SK-N-SH (cell line): ENCODE measurements at regions of chr2 and their contacts with region 1.

Region 1: DNA sequence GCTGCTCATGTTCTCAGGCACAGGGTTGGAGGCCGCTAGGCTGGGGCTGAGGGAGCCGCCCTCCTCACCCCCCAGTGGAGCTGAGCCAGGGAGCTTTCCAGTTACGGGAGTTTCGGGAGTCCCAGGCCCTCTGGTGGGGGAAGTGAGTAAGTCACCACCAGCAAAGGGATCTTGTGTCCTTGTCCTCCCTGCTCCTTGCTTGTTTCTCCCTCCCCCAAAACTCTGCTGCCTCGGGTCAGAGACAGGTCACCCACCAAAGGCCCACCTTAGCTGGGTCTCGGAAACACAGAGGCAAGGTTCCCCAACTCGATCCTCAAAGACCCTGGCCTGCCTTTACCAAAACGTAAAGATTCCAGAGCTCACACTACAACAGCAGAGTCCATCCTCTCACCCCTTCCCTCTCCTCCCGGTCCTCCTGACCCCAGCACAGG is 60.5 kb upstream of the POMC start:
- DNase-seq: peak; percentile 98
- H3K4me3 ChIP-seq: no peak overlapping the region; a peak in 1 of 4 replicates
- H3K27ac ChIP-seq: peak overlapping the region in 1 of 2 experiments; percentile 68; a peak in 2 of 4 replicates
- H3K4me1 ChIP-seq: peaks cover 3 to 37% of the 10 kb centered on the region in 2 experiments; a peak in 2 of 4 replicates
- H3K27me3 ChIP-seq: no peaks in the 10 kb centered on the region
- CTCF ChIP-seq: peak; percentile 84
- EP300 ChIP-seq: no peak
- RAD21 ChIP-seq: peak; percentile 72

Region 2: DNA sequence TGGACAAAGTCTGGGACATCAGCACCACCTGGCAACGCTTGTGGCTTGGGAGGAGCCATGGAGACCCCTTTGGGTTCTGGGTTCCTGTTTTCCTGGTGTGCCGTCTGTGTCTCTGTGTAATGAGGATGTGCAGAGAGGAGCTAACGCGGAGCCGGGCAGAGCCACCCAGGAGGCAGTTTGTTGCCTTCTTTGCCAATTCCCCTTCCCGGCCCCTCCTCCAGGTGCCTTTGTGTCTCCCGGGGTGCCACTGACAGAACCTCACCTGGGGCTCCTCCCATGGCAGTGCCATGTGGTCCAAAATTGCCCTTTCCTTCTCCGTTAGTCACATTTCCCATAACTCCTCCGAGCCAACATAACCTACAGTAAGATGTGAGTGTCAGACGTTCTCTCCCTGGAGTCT is 73.5 kb before region 1 on chr2:
- CTCF ChIA-PET with region 1: no interaction called
- POLR2A ChIA-PET with region 1: no interaction called
- DNase-seq: no peak
- H3K4me3 ChIP-seq: no peak overlapping the region
- H3K27ac ChIP-seq: no peak overlapping the region
- H3K4me1 ChIP-seq: peaks cover 0 to 9% of the 10 kb centered on the region in 2 experiments; a peak in 1 of 4 replicates
- H3K27me3 ChIP-seq: no peaks in the 10 kb centered on the region
- CTCF ChIP-seq: no peak
- EP300 ChIP-seq: no peak
- RAD21 ChIP-seq: no peak

Region 3: DNA sequence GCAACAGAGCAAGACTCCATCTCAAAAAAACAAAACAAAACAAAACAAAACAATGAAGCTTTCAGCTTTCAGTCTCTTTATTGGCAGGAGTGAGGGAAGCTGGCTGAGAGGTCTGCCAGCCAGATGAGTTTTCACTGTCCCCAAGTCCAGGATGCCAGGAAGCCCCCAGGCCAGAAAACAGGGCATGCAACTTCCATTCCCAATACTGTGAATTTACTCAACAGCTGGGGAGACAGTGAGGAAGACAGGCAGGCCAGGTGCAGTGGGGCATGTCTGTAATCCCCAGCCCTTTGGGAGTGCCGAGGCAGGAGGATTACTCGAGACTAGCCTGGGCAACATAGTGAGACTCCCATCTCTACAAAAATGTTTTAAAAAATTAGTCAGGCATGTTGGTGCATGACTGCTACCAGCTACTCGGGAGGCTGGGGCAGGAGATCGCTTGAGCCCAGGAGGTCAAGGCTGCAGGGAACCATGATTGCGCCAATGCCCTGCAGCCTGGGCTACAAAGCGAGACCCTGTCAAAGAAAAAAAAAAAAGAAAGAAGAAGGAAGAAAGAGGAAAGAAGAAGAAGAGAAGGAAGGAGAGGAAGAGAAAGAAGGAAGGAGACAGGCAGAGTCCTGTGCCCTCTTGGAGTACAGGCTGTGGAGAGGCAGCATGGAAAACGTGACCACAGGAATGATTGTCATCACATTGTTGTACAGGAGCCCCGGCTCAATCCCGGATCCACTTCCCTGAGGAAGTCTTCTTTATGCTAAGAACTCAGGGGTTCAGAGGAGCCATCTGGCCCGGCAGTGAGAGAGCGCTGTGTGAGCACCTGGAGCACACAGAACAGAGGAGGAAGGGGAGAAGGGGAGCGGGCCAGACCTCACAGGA is 31.3 kb before region 1 on chr2:
- CTCF ChIA-PET with region 1: interaction called, 44 read pairs
- POLR2A ChIA-PET with region 1: no interaction called
- DNase-seq: no peak
- H3K4me3 ChIP-seq: no peak overlapping the region
- H3K27ac ChIP-seq: no peak overlapping the region
- H3K4me1 ChIP-seq: peaks cover 0 to 8% of the 10 kb centered on the region in 2 experiments; a peak in 1 of 4 replicates
- H3K27me3 ChIP-seq: no peaks in the 10 kb centered on the region
- CTCF ChIP-seq: no peak
- EP300 ChIP-seq: no peak
- RAD21 ChIP-seq: no peak

Region 4: GRCh38 chr2:25215948-25216679 is 12.7 kb before region 1 on chr2:
- CTCF ChIA-PET with region 1: interaction called, 47 read pairs
- POLR2A ChIA-PET with region 1: no interaction called
- DNase-seq: peak; percentile 35
- H3K4me3 ChIP-seq: no peak overlapping the region
- H3K27ac ChIP-seq: no peak overlapping the region
- H3K4me1 ChIP-seq: peaks cover 0 to 8% of the 10 kb centered on the region in 2 experiments; a peak in 1 of 4 replicates
- H3K27me3 ChIP-seq: no peaks in the 10 kb centered on the region
- CTCF ChIP-seq: no peak
- EP300 ChIP-seq: no peak
- RAD21 ChIP-seq: no peak

Region 5: GRCh38 chr2:25252281-25253105 is 23.6 kb after region 1 on chr2:
- CTCF ChIA-PET with region 1: interaction called, 47 read pairs
- POLR2A ChIA-PET with region 1: interaction called, 6 read pairs
- DNase-seq: peak; percentile 99
- H3K4me3 ChIP-seq: peak overlapping the region in 1 of 2 experiments; percentile 52; a peak in 2 of 4 replicates
- H3K27ac ChIP-seq: peak overlapping the region in 1 of 2 experiments; percentile 96; a peak in 2 of 4 replicates
- H3K4me1 ChIP-seq: peaks cover 17 to 66% of the 10 kb centered on the region in 2 experiments
- H3K27me3 ChIP-seq: no peaks in the 10 kb centered on the region
- CTCF ChIP-seq: no peak
- EP300 ChIP-seq: peak in 1 of 2 experiments; percentile 37; a peak in 1 of 4 replicates
- RAD21 ChIP-seq: no peak; the same call in 1 of the 2 replicates

Region 6: DNA sequence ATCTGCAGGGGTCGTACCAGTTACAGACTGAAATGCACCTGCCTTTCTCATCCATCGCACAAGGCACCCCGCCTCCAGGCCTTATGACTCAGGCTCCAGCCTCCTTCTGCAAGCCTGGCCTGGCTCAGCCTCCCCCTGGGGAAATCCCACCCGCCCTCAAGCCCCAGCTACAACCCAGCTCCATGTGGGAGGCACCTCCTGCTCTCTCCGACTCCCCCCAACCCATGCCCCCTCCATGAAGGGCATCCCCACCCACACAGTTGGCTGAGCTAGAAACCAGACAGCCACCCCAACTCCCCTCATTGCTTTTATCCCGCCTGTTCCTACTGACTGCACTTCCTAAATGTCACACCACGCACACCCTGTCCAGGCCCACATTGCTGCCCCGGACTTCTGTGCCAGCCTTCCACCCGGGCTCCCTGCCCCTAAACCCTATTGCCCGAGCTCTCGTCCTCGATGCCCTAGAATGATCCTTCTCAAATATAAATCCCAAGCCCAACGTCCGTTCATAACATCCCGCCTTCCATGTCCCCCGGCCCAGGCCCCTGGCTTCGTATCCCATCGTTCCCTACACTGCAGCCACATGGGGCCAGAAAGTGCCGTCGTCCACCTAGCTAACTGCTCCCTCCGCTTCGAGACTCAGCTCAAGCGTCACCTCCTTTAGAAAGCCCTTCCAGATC is 103.0 kb after region 1 on chr2:
- CTCF ChIA-PET with region 1: interaction called, 10 read pairs
- POLR2A ChIA-PET with region 1: interaction called, 3 read pairs
- DNase-seq: no peak
- H3K4me3 ChIP-seq: no peak overlapping the region
- H3K27ac ChIP-seq: peak overlapping the region in 1 of 2 experiments; percentile 77; a peak in 1 of 4 replicates
- H3K4me1 ChIP-seq: peaks cover 0 to 67% of the 10 kb centered on the region in 2 experiments; a peak in 2 of 4 replicates
- H3K27me3 ChIP-seq: no peaks in the 10 kb centered on the region
- CTCF ChIP-seq: no peak
- EP300 ChIP-seq: no peak
- RAD21 ChIP-seq: no peak

Region 7: DNA sequence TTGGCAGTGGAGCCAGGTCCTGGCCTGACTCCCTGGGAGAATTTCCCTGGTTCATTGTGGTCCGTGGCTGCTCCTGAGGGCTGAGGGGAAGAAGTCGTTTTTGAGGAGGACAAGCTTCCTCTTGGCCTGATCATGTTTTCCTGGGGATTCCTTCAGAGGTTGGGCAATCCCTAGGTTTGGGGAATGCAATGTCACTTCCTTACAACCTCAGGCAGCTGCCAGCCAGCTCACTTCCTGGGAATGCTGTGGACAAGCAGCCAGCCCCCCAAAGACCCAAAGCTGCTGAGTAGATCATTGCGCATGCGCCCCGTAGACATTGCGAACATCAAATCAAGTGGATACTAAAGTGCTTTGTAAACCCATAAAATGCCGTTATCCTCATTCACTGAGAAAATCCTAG is 120.5 kb after region 1 on chr2:
- CTCF ChIA-PET with region 1: no interaction called
- POLR2A ChIA-PET with region 1: no interaction called
- DNase-seq: no peak
- H3K4me3 ChIP-seq: no peak overlapping the region
- H3K27ac ChIP-seq: no peak overlapping the region
- H3K4me1 ChIP-seq: peaks cover 0 to 9% of the 10 kb centered on the region in 2 experiments; a peak in 1 of 4 replicates
- H3K27me3 ChIP-seq: no peaks in the 10 kb centered on the region
- CTCF ChIP-seq: no peak
- EP300 ChIP-seq: no peak
- RAD21 ChIP-seq: no peak

Region 8: DNA sequence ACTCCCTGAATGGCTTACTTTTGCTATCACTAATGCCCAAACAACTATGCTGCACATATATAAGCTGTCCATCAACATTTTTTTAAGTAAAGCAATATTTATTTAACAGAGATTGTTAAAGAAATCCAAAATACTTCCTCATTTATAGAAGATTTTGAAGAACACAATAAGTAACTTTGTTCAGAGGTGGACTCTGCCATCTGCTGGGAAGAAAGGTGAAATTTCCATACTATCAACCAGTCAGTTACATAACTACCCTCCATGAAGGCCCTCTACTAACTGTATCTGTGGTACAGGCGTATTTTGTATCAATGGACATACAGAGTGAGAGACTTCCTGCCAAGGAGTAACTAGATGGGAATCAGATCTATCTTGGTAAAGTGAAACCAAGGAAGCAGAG is 338.5 kb after region 1 on chr2:
- CTCF ChIA-PET with region 1: interaction called, 10 read pairs
- POLR2A ChIA-PET with region 1: no interaction called
- DNase-seq: peak; percentile 55
- H3K4me3 ChIP-seq: no peak overlapping the region; a peak in 1 of 4 replicates
- H3K27ac ChIP-seq: no peak overlapping the region
- H3K4me1 ChIP-seq: peaks cover 0 to 7% of the 10 kb centered on the region in 2 experiments; a peak in 1 of 4 replicates
- H3K27me3 ChIP-seq: no peaks in the 10 kb centered on the region
- CTCF ChIP-seq: peak; percentile 78
- EP300 ChIP-seq: no peak
- RAD21 ChIP-seq: peak; percentile 81